ENCODE measurements at regions of chr16 and their contacts with region 1.

Region 1: GRCh38 chr16:17369421-17370222 is 101.1 kb downstream of the XYLT1 start:
- DNase-seq: peak; percentile 75
- ATAC-seq: peak; percentile 80
- H3K4me3 Mint-ChIP-seq: peak overlapping the region; percentile 85
- H3K27ac Mint-ChIP-seq: peak overlapping the region; percentile 99
- H3K4me1 Mint-ChIP-seq: peaks cover 88% of the 10 kb centered on the region
- H3K27me3 Mint-ChIP-seq: no peaks in the 10 kb centered on the region

Region 2: DNA sequence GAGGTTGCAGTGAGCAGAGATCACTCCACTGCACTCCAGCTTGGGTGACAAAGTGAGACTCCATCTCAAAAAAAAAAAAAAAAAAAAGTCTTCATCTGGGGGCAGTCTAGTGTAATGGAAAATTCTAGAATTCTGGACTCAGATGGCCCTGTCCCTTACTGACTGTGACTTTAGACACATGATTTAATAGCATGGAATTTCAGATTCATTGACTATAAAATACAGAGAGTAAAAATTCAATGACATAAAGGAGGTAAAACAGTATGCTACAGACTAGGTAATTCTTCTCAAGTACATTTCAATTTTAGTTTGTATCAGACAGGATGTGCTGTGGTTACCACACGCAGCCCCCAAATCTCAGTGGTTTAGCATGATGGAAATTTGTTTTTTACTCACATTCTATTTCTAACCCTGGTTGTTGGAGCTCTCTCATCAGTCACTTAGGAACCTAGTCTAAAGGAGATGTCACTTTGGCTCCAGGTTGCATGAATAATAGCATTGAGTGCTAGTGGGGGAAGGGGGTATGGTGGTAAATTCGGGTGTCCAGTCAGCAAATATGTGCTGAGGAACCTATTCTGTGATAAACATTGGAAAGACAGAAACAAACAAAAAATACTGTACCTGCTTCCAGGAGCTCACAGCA is 342.9 kb before region 1 on chr16:
- CTCF ChIA-PET with region 1: no interaction called
- POLR2A ChIA-PET with region 1: no interaction called
- intact Hi-C with region 1: loop called in 1 of 2 experiments (anchors 10 kb)
- DNase-seq: peak; percentile 68
- ATAC-seq: peak; percentile 93
- H3K4me3 Mint-ChIP-seq: no peak overlapping the region
- H3K27ac Mint-ChIP-seq: peak overlapping the region; percentile 48
- H3K4me1 Mint-ChIP-seq: peaks cover 27% of the 10 kb centered on the region
- H3K27me3 Mint-ChIP-seq: no peaks in the 10 kb centered on the region

Region 3: DNA sequence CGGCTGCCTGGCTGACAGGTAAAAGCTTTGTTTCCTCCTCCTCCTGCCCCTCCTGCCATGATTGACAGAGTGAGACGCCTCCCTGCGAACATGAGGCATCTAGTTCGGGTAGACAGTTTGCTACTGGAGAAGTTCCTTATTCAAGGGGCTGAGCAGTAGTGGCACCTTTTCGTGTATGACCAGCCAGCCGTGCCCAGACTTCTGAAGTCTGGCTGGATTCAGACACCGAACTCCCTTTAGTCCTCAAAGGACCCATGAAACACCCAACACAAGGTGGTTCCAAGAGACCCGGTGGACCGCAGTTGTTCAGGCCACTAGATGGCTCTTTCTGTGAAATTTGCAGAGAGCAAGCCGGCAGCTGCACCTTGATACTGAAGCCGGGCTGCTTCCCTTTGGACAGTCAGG is 91.6 kb before region 1 on chr16:
- CTCF ChIA-PET with region 1: no interaction called
- POLR2A ChIA-PET with region 1: no interaction called
- intact Hi-C with region 1: loop called (anchors 5 kb)
- DNase-seq: peak; percentile 20
- ATAC-seq: no peak
- H3K4me3 Mint-ChIP-seq: no peak overlapping the region
- H3K27ac Mint-ChIP-seq: no peak overlapping the region
- H3K4me1 Mint-ChIP-seq: peaks cover 31% of the 10 kb centered on the region
- H3K27me3 Mint-ChIP-seq: no peaks in the 10 kb centered on the region

Region 4: GRCh38 chr16:17382949-17383863 is 13.6 kb after region 1 on chr16:
- CTCF ChIA-PET with region 1: interaction called, 14 read pairs
- POLR2A ChIA-PET with region 1: interaction called, 3 read pairs
- intact Hi-C with region 1: no loop called
- DNase-seq: no peak
- ATAC-seq: peak; percentile 36
- H3K4me3 Mint-ChIP-seq: no peak overlapping the region
- H3K27ac Mint-ChIP-seq: peak overlapping the region; percentile 62
- H3K4me1 Mint-ChIP-seq: peaks cover 39% of the 10 kb centered on the region
- H3K27me3 Mint-ChIP-seq: no peaks in the 10 kb centered on the region

Region 5: GRCh38 chr16:17416461-17417311 is 47.1 kb after region 1 on chr16:
- CTCF ChIA-PET with region 1: interaction called, 3 read pairs
- POLR2A ChIA-PET with region 1: no interaction called
- intact Hi-C with region 1: loop called (anchors 1 to 2 kb)
- DNase-seq: peak; percentile 74
- ATAC-seq: peak; percentile 89
- H3K4me3 Mint-ChIP-seq: peak overlapping the region; percentile 69
- H3K27ac Mint-ChIP-seq: peak overlapping the region; percentile 93
- H3K4me1 Mint-ChIP-seq: peaks cover 50% of the 10 kb centered on the region
- H3K27me3 Mint-ChIP-seq: no peaks in the 10 kb centered on the region